Esophagus muscularis mucosa (tissue), 4 donors: ENCODE measurements at regions of chr4 and their contacts with region 1.

Region 1: GRCh38 chr4:167021545-167022155 is 212.6 kb downstream of the SPOCK3 start:
- DNase-seq: no peak
- H3K4me3 ChIP-seq: no peak overlapping the region
- H3K27ac ChIP-seq: no peak overlapping the region
- H3K4me1 ChIP-seq: no peaks in the 10 kb centered on the region
- H3K27me3 ChIP-seq: no peaks in the 10 kb centered on the region
- CTCF ChIP-seq: peak; percentile 45 to 78 (median 73)
- EP300 ChIP-seq: no peak
- POLR2A ChIP-seq: no peak

Region 2: DNA sequence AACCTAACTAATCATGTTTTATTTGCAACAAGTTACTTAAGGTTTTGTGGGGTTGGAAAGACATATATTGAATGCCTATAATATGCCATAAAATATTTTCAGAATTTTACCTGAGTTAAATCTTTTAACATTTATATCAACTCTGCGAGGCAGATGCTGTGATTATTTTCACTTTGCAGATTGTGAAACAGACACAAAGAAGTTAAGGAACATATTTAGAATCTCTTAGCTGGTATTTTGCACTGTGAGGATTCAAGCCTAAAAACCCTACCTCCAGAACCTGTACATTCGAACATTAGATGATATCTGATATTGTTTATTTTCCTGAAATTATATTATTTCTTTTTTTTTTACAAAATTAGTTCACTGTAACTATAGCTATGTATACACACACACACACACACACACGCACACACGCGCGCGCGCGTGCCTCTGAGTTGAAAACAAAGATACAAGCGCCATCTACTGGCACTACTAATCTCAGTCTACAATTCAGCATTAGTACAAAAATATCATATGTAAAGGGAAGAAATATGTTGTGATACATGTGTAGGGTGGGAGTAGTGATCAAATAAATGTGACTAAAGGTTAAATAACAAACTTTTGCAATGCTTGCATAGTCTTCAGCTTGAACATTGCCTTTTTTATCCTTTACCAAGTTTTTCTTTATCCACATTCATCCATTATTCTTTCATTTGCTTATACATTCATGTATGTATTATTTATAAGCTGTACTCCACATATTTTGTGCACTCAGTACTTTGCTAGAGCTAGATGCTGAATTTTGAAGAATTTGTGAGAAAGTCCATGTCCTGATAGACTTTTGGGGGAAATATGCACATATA is 1132.2 kb after region 1 on chr4:
- intact Hi-C with region 1: loop called (anchors 5 kb)
- DNase-seq: no peak
- H3K4me3 ChIP-seq: peak overlapping the region; percentile 26 to 33 (median 28)
- H3K27ac ChIP-seq: no peak overlapping the region
- H3K4me1 ChIP-seq: no peaks in the 10 kb centered on the region
- H3K27me3 ChIP-seq: no peaks in the 10 kb centered on the region
- CTCF ChIP-seq: peak; percentile 50 to 62 (median 59)
- EP300 ChIP-seq: no peak
- POLR2A ChIP-seq: no peak